ENCODE measurements at regions of chr2 and their contacts with region 1.

Region 1: GRCh38 chr2:44087036-44087713 is 81.5 kb upstream of the PPM1B start:
- DNase-seq: peak; percentile 68 to 90 (median 80)
- ATAC-seq: peak; percentile 94
- H3K4me3 ChIP-seq: peak overlapping the region; percentile 48
- H3K4me3 Mint-ChIP-seq: peak overlapping the region; percentile 87
- H3K27ac ChIP-seq: no peak overlapping the region
- H3K27ac Mint-ChIP-seq: peak overlapping the region; percentile 79
- H3K4me1 ChIP-seq: peaks cover 9% of the 10 kb centered on the region
- H3K4me1 Mint-ChIP-seq: peaks cover 11% of the 10 kb centered on the region
- H3K27me3 ChIP-seq: no peaks in the 10 kb centered on the region
- H3K27me3 Mint-ChIP-seq: no peaks in the 10 kb centered on the region
- CTCF ChIP-seq: peak; percentile 95

Region 2: GRCh38 chr2:44237221-44237620 is 150.0 kb after region 1 on chr2:
- CTCF ChIA-PET with region 1: no interaction called
- POLR2A ChIA-PET with region 1: no interaction called
- intact Hi-C with region 1: loop called (anchors 1 to 5 kb)
- DNase-seq: peak in 9 of 14 experiments; percentile 5 to 77 (median 24)
- ATAC-seq: peak; percentile 90
- H3K4me3 ChIP-seq: peak overlapping the region; percentile 24
- H3K4me3 Mint-ChIP-seq: peak overlapping the region; percentile 16
- H3K27ac ChIP-seq: peak overlapping the region; percentile 8 to 59
- H3K27ac Mint-ChIP-seq: peak overlapping the region; percentile 82
- H3K4me1 ChIP-seq: peaks cover 15% of the 10 kb centered on the region
- H3K4me1 Mint-ChIP-seq: peaks cover 38% of the 10 kb centered on the region
- H3K27me3 ChIP-seq: no peaks in the 10 kb centered on the region
- H3K27me3 Mint-ChIP-seq: no peaks in the 10 kb centered on the region
- CTCF ChIP-seq: no peak

Region 3: DNA sequence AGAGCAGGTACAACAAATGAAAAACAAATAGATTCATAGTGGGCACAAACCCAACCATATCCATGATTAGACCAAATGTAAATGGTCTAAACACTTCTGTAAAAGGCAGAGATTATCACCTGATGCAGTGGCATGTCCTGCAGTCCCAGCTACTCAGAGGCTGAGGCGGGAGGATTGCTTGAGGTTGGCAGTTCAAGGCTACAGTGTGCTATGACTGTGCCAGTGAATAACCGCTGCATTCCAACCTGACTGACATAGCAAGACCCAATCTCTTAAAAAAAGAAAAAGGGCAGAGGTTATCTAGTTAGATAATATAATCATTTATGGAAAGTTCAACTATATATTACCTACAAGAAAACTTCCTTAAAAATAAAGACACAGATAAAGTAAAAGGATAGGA is 166.8 kb after region 1 on chr2:
- CTCF ChIA-PET with region 1: no interaction called
- POLR2A ChIA-PET with region 1: no interaction called
- intact Hi-C with region 1: no loop called
- DNase-seq: no peak
- ATAC-seq: no peak
- H3K4me3 ChIP-seq: no peak overlapping the region
- H3K4me3 Mint-ChIP-seq: no peak overlapping the region
- H3K27ac ChIP-seq: no peak overlapping the region
- H3K27ac Mint-ChIP-seq: no peak overlapping the region
- H3K4me1 ChIP-seq: no peaks in the 10 kb centered on the region
- H3K4me1 Mint-ChIP-seq: no peaks in the 10 kb centered on the region
- H3K27me3 ChIP-seq: no peaks in the 10 kb centered on the region
- H3K27me3 Mint-ChIP-seq: peaks cover 25% of the 10 kb centered on the region
- CTCF ChIP-seq: no peak

Region 4: GRCh38 chr2:44295607-44296359 is 208.6 kb after region 1 on chr2:
- CTCF ChIA-PET with region 1: no interaction called
- POLR2A ChIA-PET with region 1: no interaction called
- intact Hi-C with region 1: loop called (anchors 2 kb)
- DNase-seq: peak in 5 of 14 experiments; percentile 1 to 31 (median 21)
- ATAC-seq: no peak
- H3K4me3 ChIP-seq: no peak overlapping the region
- H3K4me3 Mint-ChIP-seq: no peak overlapping the region
- H3K27ac ChIP-seq: no peak overlapping the region
- H3K27ac Mint-ChIP-seq: no peak overlapping the region
- H3K4me1 ChIP-seq: no peaks in the 10 kb centered on the region
- H3K4me1 Mint-ChIP-seq: peaks cover 17% of the 10 kb centered on the region
- H3K27me3 ChIP-seq: peaks cover 0 to 6% of the 10 kb centered on the region in 2 experiments
- H3K27me3 Mint-ChIP-seq: peaks cover 24% of the 10 kb centered on the region
- CTCF ChIP-seq: no peak

Region 5: DNA sequence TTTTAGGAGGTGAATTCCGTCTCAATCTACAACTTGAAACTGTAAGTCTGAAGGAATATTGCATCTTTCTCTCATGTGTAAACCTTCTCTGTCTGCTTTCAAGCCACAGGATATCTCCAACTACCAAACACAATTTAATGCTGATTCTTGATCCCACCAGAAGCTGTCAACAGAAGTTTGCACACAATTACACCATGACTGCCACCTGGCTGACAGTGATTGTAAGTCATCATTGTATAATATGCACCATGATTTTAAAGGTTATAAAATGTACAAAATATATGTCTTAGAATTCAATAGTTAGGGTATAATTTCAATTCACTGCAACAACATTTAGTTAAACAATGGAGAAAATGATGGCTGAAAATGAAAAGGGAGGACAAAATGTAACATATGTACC is 255.7 kb after region 1 on chr2:
- CTCF ChIA-PET with region 1: interaction called, 4 read pairs
- POLR2A ChIA-PET with region 1: no interaction called
- intact Hi-C with region 1: loop called (anchors 1 to 5 kb)
- DNase-seq: peak in 6 of 14 experiments; percentile 7 to 61 (median 32)
- ATAC-seq: peak; percentile 68
- H3K4me3 ChIP-seq: no peak overlapping the region
- H3K4me3 Mint-ChIP-seq: no peak overlapping the region
- H3K27ac ChIP-seq: no peak overlapping the region
- H3K27ac Mint-ChIP-seq: no peak overlapping the region
- H3K4me1 ChIP-seq: no peaks in the 10 kb centered on the region
- H3K4me1 Mint-ChIP-seq: peaks cover 10% of the 10 kb centered on the region
- H3K27me3 ChIP-seq: no peaks in the 10 kb centered on the region
- H3K27me3 Mint-ChIP-seq: no peaks in the 10 kb centered on the region
- CTCF ChIP-seq: peak; percentile 44

Measured in CD4-positive, alpha-beta T cell (primary cell).